ENCODE measurements at regions of chr9 and their contacts with region 1.

Region 1: GRCh38 chr9:27276193-27277030 is 20.5 kb downstream of the EQTN start:
- DNase-seq: no peak
- H3K4me3 Mint-ChIP-seq: no peak overlapping the region
- H3K27ac Mint-ChIP-seq: no peak overlapping the region
- H3K4me1 Mint-ChIP-seq: no peaks in the 10 kb centered on the region
- H3K27me3 Mint-ChIP-seq: peaks cover 2% of the 10 kb centered on the region

Region 2: GRCh38 chr9:27019589-27019988 is 256.8 kb before region 1 on chr9:
- intact Hi-C with region 1: no loop called
- DNase-seq: no peak
- H3K4me3 Mint-ChIP-seq: no peak overlapping the region
- H3K27ac Mint-ChIP-seq: no peak overlapping the region
- H3K4me1 Mint-ChIP-seq: peaks cover 2% of the 10 kb centered on the region
- H3K27me3 Mint-ChIP-seq: no peaks in the 10 kb centered on the region

Region 3: DNA sequence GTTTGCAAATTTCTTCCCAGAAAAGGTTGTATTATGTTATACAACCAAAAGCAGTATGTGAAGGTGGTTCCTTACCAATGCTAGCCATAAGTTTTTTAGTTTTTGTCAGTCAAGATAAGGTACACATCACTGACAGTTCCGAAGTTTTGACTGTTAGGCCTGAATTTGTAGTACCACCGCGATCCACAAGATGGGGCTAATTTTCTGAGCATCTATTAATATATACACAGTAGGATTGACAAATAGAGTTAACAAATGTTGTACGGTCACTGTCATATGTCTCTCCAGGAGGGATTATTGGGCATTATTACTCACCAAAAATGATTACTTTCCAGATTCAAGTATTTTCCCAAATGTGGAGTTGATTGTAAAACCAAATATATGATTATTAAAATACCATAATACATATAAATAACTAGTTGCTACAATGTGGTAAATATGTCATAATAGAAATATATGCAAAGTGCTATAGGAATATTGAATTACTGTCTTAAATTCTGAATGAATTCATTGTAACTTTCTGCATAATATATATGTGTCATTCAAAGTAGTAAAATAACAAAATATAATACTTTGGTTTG is 242.5 kb before region 1 on chr9:
- intact Hi-C with region 1: loop called (anchors 1 kb)
- DNase-seq: peak; percentile 16
- H3K4me3 Mint-ChIP-seq: no peak overlapping the region
- H3K27ac Mint-ChIP-seq: no peak overlapping the region
- H3K4me1 Mint-ChIP-seq: no peaks in the 10 kb centered on the region
- H3K27me3 Mint-ChIP-seq: no peaks in the 10 kb centered on the region

Measured in activated T-helper 2 cell treated with anti-CD3 and anti-CD28 coated beads, Interferon-gamma antibody, Interleukin-2, Interleukin-4, amounts not matched to agents 10 μg/mL and 5 μg/mL and 100 μg/mL, durations not matched to agents 14 hours and 24 hours and 36 hours (primary cell).